B cell (primary cell): ENCODE measurements at regions of chr17 and their contacts with region 1.

Region 1: GRCh38 chr17:61361084-61361483 is 38.6 kb upstream of the TBX2 start:
- DNase-seq: no peak
- ATAC-seq: no peak
- H3K4me3 ChIP-seq: no peak overlapping the region
- H3K4me3 Mint-ChIP-seq: no peak overlapping the region
- H3K27ac ChIP-seq: no peak overlapping the region
- H3K27ac Mint-ChIP-seq: no peak overlapping the region
- H3K4me1 ChIP-seq: no peaks in the 10 kb centered on the region
- H3K4me1 Mint-ChIP-seq: no peaks in the 10 kb centered on the region
- H3K27me3 ChIP-seq: no peaks in the 10 kb centered on the region
- H3K27me3 Mint-ChIP-seq: no peaks in the 10 kb centered on the region
- CTCF ChIP-seq: no peak

Region 2: DNA sequence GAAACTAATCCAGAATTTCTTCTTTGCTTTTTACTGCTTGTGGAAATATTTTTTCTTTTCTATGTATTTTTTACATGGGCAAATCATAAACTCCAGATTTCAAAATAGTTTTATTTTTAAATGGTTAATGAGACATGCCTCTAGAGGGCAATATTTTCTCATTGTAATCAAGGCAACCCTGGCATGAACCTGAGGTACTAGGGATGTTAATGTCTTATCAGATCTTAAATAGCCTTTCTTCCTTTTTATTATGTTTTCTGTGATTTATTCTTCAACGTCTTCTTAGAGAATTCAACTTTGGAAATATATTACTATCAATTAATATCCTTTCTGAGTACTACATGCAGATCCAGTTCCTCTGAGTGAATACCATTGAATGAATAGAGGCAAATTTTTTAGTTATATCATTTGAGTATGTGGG is 358.8 kb before region 1 on chr17:
- CTCF ChIA-PET with region 1: interaction called, 7 read pairs
- POLR2A ChIA-PET with region 1: no interaction called
- intact Hi-C with region 1: loop called (anchors 1 kb)
- DNase-seq: peak; percentile 41
- ATAC-seq: no peak
- H3K4me3 ChIP-seq: no peak overlapping the region
- H3K4me3 Mint-ChIP-seq: no peak overlapping the region
- H3K27ac ChIP-seq: no peak overlapping the region
- H3K27ac Mint-ChIP-seq: no peak overlapping the region
- H3K4me1 ChIP-seq: no peaks in the 10 kb centered on the region
- H3K4me1 Mint-ChIP-seq: no peaks in the 10 kb centered on the region
- H3K27me3 ChIP-seq: no peaks in the 10 kb centered on the region
- H3K27me3 Mint-ChIP-seq: no peaks in the 10 kb centered on the region
- CTCF ChIP-seq: peak; percentile 78

Region 3: GRCh38 chr17:61267847-61268246 is 93.2 kb before region 1 on chr17:
- CTCF ChIA-PET with region 1: no interaction called
- POLR2A ChIA-PET with region 1: no interaction called
- intact Hi-C with region 1: no loop called
- DNase-seq: no peak
- ATAC-seq: no peak
- H3K4me3 ChIP-seq: no peak overlapping the region
- H3K4me3 Mint-ChIP-seq: no peak overlapping the region
- H3K27ac ChIP-seq: no peak overlapping the region
- H3K27ac Mint-ChIP-seq: no peak overlapping the region
- H3K4me1 ChIP-seq: no peaks in the 10 kb centered on the region
- H3K4me1 Mint-ChIP-seq: no peaks in the 10 kb centered on the region
- H3K27me3 ChIP-seq: no peaks in the 10 kb centered on the region
- H3K27me3 Mint-ChIP-seq: no peaks in the 10 kb centered on the region
- CTCF ChIP-seq: no peak

Region 4: GRCh38 chr17:61376931-61377838 is 16.1 kb after region 1 on chr17:
- CTCF ChIA-PET with region 1: no interaction called
- POLR2A ChIA-PET with region 1: no interaction called
- intact Hi-C with region 1: no loop called
- DNase-seq: no peak
- ATAC-seq: no peak
- H3K4me3 ChIP-seq: no peak overlapping the region
- H3K4me3 Mint-ChIP-seq: no peak overlapping the region
- H3K27ac ChIP-seq: no peak overlapping the region
- H3K27ac Mint-ChIP-seq: no peak overlapping the region
- H3K4me1 ChIP-seq: peaks cover 0 to 3% of the 10 kb centered on the region in 2 donors
- H3K4me1 Mint-ChIP-seq: peaks cover 5% of the 10 kb centered on the region
- H3K27me3 ChIP-seq: no peaks in the 10 kb centered on the region
- H3K27me3 Mint-ChIP-seq: no peaks in the 10 kb centered on the region
- CTCF ChIP-seq: no peak